ENCODE measurements at regions of chr16 and their contacts with region 1.

Region 1: DNA sequence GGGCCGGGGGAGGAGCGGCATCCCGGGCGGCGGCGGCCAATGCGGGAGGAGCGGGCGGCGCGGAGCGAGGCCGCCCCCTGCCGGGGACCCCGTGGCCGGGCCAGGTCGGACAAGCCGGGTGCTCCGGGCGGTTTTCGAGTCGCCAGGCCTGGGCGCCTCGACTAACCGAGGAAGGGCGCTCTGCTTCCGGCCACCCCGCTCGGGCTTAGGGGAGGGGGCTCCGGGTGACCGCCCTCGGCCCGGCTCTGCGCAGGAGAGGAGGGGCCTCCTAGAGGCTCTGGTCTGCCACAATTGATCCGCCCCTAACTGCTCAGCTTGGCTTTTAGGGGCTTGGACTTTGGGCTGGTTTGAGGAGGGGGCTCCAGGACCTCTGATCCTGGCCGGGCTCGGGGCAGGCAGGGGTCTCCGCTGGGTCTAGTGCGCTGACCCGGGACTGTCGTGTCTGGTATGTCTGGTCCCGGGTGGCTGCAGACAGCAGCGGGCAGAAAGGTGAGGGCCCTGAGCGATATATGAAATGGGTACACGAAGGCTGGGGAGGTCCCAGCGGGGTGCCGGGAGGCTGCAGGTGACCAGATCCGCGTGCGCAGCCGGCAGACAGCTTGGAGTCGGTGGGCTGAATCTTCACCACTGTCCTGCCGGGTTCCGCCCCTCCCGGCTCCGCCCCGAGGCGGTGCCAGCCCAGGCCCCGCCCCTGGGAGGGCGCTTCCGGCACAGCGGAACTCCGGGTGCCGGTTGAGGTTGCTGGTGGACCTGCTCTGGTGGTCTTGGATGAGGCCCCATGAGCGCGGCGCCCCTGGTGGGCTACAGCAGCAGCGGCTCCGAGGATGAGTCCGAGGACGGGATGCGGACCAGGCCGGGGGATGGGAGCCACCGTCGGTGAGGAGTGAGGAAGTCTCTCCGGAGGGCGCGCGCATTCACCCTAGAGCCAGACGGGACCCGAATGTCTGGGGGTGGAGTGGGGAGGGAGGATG is at the start of gene USB1:
- DNase-seq: peak; percentile 83
- ATAC-seq: peak; percentile 82
- H3K4me3 Mint-ChIP-seq: peak within 1 kb of the TSS; percentile 90
- H3K27ac Mint-ChIP-seq: peak within 1 kb of the TSS; percentile 89
- H3K4me1 Mint-ChIP-seq: peaks cover 40% of the 10 kb centered on the region
- H3K27me3 Mint-ChIP-seq: no peaks in the 10 kb centered on the region
- CTCF ChIP-seq: peak; percentile 67
- total RNA-seq, gene USB1: 32.9 to 37.5 TPM

Region 2: GRCh38 chr16:57899771-57900661 is 101.0 kb before region 1 on chr16:
- CTCF ChIA-PET with region 1: interaction called, 36 read pairs
- POLR2A ChIA-PET with region 1: interaction called, 4 read pairs
- intact Hi-C with region 1: loop called (anchors 5 kb)
- DNase-seq: peak; percentile 88
- ATAC-seq: peak; percentile 75
- H3K4me3 Mint-ChIP-seq: no peak overlapping the region
- H3K27ac Mint-ChIP-seq: no peak overlapping the region
- H3K4me1 Mint-ChIP-seq: no peaks in the 10 kb centered on the region
- H3K27me3 Mint-ChIP-seq: peaks cover 8% of the 10 kb centered on the region
- CTCF ChIP-seq: peak; percentile 90

Region 3: GRCh38 chr16:57966133-57966805 is 34.7 kb before region 1 on chr16:
- CTCF ChIA-PET with region 1: no interaction called
- POLR2A ChIA-PET with region 1: no interaction called
- intact Hi-C with region 1: no loop called
- DNase-seq: no peak
- ATAC-seq: no peak
- H3K4me3 Mint-ChIP-seq: no peak overlapping the region
- H3K27ac Mint-ChIP-seq: no peak overlapping the region
- H3K4me1 Mint-ChIP-seq: no peaks in the 10 kb centered on the region
- H3K27me3 Mint-ChIP-seq: no peaks in the 10 kb centered on the region
- CTCF ChIP-seq: no peak